Activated CD8-positive, alpha-beta memory T cell treated with anti-CD3 and anti-CD28 coated beads, Interleukin-2, amount 10 ng/mL, durations not matched to agents 7 days and 5 days (primary cell): ENCODE measurements at regions of chr4 and their contacts with region 1.

Region 1: DNA sequence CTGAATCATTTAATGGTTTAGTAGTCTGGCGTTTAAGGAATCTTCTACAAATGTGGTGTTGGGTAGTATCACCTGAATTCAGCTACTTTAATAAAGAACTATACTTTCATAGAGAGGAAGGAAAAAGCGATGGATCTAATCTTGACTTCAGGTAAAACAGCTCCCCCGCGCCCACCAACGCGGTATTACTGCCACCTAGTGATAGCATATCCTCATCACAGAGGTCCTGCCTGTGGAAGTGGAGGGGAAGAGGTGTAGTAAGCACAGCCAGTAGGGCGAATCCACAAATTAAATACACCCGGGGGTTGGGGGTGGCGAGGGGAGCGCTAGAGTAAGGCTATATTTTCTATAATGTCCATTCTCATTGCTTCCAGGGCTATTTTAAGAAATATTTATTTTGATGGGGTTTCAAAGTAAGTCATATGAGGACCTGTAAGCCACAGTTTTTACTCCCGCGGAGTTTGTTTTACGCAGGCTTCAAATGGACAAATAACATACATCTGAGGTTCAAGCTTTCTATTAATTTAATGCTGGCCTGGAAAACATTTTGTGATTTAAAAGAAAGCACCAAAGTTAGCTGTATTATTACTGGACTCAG is 8.3 kb upstream of the DAPP1 start:
- DNase-seq: peak; percentile 82
- ATAC-seq: peak; percentile 90
- H3K4me3 Mint-ChIP-seq: no peak overlapping the region
- H3K27ac Mint-ChIP-seq: no peak overlapping the region
- H3K4me1 Mint-ChIP-seq: peaks cover 25% of the 10 kb centered on the region
- H3K27me3 Mint-ChIP-seq: peaks cover 8% of the 10 kb centered on the region

Region 2: DNA sequence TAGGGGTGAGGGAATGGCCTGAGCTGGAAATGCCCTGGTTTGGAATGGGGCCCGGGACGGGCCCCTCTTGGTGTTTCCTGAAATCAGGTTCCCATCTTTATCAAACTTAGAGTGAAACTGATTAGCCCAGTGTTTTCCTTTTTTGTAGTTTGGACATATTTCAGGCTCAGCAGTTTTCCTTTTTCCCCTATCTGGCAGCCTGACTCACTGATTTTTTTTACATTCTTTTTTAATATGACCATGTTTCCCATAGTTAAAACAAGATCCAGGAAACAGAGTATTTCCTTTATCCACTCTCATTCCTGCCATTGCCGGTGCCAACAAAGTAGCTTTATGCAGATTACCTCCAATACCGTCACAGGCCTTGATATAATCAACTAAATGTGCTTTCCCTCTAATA is 318.1 kb before region 1 on chr4:
- CTCF ChIA-PET with region 1: no interaction called
- DNase-seq: no peak
- ATAC-seq: no peak
- H3K4me3 Mint-ChIP-seq: no peak overlapping the region
- H3K27ac Mint-ChIP-seq: no peak overlapping the region
- H3K4me1 Mint-ChIP-seq: no peaks in the 10 kb centered on the region
- H3K27me3 Mint-ChIP-seq: peaks cover 5% of the 10 kb centered on the region

Region 3: GRCh38 chr4:99563310-99564186 is 244.8 kb before region 1 on chr4 and contains the start of gene TRMT10A:
- CTCF ChIA-PET with region 1: interaction called, 44 read pairs
- DNase-seq: peak; percentile 97
- ATAC-seq: peak; percentile 93
- H3K4me3 Mint-ChIP-seq: peak within 1 kb of the TSS; percentile 92
- H3K27ac Mint-ChIP-seq: peak within 1 kb of the TSS; percentile 98
- H3K4me1 Mint-ChIP-seq: peaks cover 25% of the 10 kb centered on the region
- H3K27me3 Mint-ChIP-seq: peaks cover 15% of the 10 kb centered on the region
- total RNA-seq, gene TRMT10A: 7.9 to 8.6 TPM

Region 4: DNA sequence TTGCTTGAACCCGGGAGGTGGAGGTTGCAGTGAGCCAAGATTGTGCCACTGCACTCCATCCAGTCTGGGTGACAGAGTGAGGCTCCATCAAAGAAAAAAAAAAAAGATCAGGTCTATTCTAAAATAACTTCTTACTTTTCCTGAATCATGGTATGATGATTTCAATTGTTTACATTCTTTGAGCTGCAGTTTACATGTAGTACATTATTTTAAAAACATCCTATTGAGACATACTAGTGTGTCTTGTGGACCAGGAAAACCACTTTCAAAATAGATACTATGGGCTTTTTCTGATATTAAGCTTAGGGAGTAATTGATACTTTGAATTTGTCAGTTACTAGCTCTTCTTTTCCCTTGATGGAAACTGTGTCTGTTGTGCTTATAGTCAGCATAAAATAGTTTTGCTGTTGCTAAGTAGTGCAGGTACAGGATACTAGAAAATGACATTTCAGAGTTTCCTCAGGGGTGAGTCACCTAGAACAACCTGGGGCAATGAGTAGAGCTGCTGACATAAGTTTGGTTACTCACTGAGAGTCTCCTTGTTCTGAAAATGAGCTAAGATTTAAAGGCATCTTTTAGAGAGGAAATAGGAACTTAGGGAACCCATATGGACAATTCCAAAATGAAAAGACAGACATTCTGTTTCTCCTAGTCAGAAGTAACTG is 97.5 kb before region 1 on chr4:
- CTCF ChIA-PET with region 1: no interaction called
- DNase-seq: no peak
- ATAC-seq: no peak
- H3K4me3 Mint-ChIP-seq: no peak overlapping the region
- H3K27ac Mint-ChIP-seq: no peak overlapping the region
- H3K4me1 Mint-ChIP-seq: no peaks in the 10 kb centered on the region
- H3K27me3 Mint-ChIP-seq: peaks cover 5% of the 10 kb centered on the region

Region 5: GRCh38 chr4:99868126-99868596 is 59.8 kb after region 1 on chr4:
- CTCF ChIA-PET with region 1: interaction called, 10 read pairs
- DNase-seq: peak; percentile 64
- ATAC-seq: peak; percentile 94
- H3K4me3 Mint-ChIP-seq: no peak overlapping the region
- H3K27ac Mint-ChIP-seq: peak overlapping the region; percentile 71
- H3K4me1 Mint-ChIP-seq: peaks cover 20% of the 10 kb centered on the region
- H3K27me3 Mint-ChIP-seq: no peaks in the 10 kb centered on the region

Region 6: DNA sequence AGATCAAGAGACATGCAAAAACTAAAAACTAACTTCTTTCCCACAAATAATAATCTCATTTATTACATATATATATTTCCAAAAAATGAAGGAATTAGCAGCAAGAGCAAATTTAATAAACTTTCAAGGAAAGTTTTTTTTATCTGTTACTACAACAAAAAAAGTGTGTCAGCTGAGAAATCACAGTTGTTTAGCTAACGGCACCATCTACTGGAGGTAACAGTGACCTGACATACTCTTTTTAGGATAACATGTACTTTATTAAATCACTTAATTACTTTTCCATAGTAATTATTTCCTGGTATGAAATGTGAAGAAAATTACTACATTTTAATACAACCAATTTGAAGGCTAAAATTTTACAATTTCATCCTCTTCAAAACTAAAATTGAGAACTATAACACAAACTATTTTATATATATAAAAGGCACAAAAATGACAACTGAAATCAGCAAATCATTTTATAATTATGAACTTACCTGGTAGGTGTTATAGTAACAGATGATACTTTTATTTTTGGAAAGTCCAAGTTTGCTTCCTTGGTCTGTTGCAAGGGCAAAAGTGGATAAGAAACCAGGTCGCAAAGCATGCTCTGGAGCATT is 76.8 kb after region 1 on chr4:
- CTCF ChIA-PET with region 1: interaction called, 64 read pairs
- DNase-seq: peak; percentile 55
- ATAC-seq: no peak
- H3K4me3 Mint-ChIP-seq: no peak overlapping the region
- H3K27ac Mint-ChIP-seq: no peak overlapping the region
- H3K4me1 Mint-ChIP-seq: peaks cover 8% of the 10 kb centered on the region
- H3K27me3 Mint-ChIP-seq: no peaks in the 10 kb centered on the region

Region 7: DNA sequence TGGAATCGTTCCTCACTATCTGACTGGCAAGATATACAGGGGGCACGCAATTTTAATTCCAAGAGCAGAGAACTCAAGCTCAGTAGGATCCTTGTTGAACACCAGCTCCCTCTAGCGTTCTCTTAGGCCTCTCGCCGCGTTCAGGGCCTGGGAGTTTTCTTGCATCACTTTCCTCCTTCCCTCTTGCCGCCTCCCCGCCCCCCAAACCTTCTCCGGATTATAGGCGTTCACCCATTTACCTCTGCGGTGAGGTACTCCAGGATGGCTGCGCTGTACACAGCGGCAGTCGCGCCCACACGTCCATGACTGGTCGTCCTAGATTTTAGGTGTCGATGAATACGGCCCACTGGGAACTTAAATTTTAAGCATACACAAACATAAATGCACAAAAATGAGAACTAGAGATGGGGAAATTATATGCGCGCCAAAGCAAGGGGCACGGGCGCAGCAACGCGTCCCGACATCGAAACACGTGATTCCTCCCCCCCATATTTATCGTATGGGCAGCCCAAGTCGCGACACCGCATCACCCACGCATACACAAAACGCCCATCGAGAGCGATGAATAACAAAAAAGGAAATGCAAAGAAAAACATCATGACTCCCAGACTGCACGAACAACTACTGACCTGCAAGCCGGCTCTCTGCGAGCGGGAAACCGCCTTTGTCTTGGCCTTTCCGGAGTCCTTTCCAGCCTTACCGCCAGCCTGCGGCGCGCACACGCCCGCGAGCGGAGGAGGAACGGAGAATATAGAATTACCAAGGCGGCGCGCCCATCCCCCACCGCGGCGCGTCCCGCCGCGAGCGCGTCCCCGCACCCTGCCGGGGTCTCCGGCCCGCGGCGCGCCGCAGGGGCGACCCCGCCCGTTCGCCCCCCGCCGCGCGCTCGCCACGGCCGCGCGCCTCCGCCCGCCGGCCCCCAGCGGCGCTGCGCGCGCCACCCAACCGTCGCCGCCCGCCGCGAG is 141.0 kb after region 1 on chr4:
- CTCF ChIA-PET with region 1: interaction called, 42 read pairs
- DNase-seq: peak; percentile 96
- ATAC-seq: peak; percentile 18
- H3K4me3 Mint-ChIP-seq: no peak overlapping the region
- H3K27ac Mint-ChIP-seq: no peak overlapping the region
- H3K4me1 Mint-ChIP-seq: peaks cover 32% of the 10 kb centered on the region
- H3K27me3 Mint-ChIP-seq: no peaks in the 10 kb centered on the region